ENCODE measurements at regions of chr17 and their contacts with region 1.

Region 1: DNA sequence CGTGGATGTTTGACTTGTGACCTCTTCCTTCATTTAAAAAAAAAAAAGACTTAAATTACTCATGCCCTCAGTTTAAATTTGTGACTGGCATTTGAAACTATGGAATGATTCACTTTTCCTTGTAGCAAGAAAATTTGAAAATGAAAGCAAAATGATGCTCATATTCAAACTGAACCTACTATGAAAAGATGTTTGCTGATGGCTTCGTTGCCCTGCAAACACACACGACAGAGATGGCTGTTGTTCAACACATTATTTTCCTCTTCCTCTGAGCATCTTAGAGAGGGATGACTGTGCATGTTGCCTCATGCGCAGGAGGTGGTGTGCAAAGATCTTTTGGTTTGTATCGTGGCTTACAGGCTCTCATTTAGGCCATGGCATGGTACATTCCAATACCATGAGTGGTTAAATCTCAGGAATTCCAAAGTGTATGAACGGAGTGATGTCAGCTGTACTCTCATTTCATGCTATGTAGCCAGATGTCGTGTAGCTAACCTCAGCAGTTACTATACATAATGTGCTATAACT is 164.5 kb downstream of the PRKCA start:
- DNase-seq: peak; percentile 73 to 98
- H3K4me3 ChIP-seq: peak overlapping the region; percentile 44; the same call in 1 of the 2 replicates
- H3K27ac ChIP-seq: peak overlapping the region; percentile 94
- H3K4me1 ChIP-seq: peaks cover 69% of the 10 kb centered on the region
- H3K27me3 ChIP-seq: no peaks in the 10 kb centered on the region
- CTCF ChIP-seq: no peak

Region 2: DNA sequence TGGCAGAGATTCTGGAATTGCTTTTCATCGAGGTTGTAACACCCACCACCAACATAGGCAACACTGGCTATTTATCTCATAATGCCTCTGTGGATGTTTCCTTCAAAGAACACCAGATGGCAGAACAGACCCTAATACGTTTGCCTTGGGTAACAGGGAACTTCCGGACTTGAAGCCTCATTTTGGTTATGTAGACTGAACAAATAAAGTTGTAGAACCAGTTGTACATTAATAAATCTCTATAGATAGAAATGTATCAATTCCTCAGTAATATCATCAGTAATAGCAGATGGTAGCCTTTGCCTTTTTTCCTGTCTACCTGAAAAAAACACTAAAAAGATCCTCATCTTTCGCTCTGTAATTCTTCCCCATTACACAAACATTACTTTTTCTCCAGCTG is 211.8 kb before region 1 on chr17:
- CTCF ChIA-PET with region 1: no interaction called
- POLR2A ChIA-PET with region 1: no interaction called
- intact Hi-C with region 1: loop called (anchors 5 kb)
- DNase-seq: peak; percentile 34 to 79
- H3K4me3 ChIP-seq: no peak overlapping the region
- H3K27ac ChIP-seq: no peak overlapping the region
- H3K4me1 ChIP-seq: peaks cover 10% of the 10 kb centered on the region
- H3K27me3 ChIP-seq: no peaks in the 10 kb centered on the region
- CTCF ChIP-seq: peak; percentile 86

Region 3: DNA sequence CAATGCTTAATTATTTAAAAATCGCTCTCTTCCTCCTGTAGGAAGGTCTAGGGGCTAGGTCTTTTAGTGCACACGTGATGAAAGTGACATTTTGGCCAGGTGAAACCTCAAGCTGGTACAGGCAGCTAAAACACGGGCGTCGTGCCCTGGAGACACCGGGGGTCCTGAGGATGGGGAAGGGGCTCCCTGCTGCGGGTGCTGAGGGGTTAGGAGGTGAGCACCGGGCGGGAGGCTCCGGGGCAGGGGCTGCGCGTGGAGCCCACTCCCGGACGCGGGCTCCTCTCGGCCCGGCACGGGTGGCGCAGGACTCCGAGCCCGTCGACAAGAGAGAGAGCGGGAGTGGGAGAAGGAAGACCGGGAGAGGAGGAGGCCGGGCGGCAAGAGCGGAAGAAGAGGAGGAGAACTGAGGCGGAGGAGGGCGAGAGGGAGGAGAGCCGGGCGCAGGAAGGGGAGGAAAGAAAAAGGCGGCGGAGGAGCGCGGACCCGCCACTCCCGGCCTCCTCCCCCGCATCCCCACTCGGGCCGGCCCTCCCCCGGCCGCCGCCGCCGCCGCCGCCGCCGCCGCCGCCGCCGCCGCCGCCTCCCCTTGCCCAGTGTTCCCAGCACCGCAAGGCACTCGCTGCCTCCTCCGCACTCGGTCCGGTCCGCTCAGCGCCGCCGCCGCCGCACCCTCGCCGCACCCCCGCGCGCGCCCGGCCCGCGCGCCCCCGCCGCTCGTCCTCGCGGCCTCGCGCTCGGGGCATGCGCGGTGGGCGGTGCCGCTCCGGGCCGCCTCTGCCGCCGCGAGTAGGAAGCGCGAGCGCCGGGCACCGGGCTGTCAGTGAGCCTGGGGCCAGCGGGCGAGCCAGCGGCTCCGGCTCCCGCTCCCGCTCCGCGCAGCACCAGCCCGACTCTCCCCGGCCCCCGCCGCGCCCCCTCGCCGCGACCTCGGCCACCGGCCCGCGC is 164.8 kb before region 1 on chr17 and contains the start of gene PRKCA:
- CTCF ChIA-PET with region 1: no interaction called
- POLR2A ChIA-PET with region 1: no interaction called
- intact Hi-C with region 1: loop called (anchors 2 kb)
- DNase-seq: peak in 1 of 2 experiments; percentile 83
- H3K4me3 ChIP-seq: peak within 1 kb of the TSS; percentile 96
- H3K27ac ChIP-seq: peak within 1 kb of the TSS; percentile 56
- H3K4me1 ChIP-seq: peaks cover 30% of the 10 kb centered on the region
- H3K27me3 ChIP-seq: no peaks in the 10 kb centered on the region
- CTCF ChIP-seq: no peak
- total RNA-seq, gene PRKCA: 23.1 and 23.8 TPM in 2 replicates

Region 4: DNA sequence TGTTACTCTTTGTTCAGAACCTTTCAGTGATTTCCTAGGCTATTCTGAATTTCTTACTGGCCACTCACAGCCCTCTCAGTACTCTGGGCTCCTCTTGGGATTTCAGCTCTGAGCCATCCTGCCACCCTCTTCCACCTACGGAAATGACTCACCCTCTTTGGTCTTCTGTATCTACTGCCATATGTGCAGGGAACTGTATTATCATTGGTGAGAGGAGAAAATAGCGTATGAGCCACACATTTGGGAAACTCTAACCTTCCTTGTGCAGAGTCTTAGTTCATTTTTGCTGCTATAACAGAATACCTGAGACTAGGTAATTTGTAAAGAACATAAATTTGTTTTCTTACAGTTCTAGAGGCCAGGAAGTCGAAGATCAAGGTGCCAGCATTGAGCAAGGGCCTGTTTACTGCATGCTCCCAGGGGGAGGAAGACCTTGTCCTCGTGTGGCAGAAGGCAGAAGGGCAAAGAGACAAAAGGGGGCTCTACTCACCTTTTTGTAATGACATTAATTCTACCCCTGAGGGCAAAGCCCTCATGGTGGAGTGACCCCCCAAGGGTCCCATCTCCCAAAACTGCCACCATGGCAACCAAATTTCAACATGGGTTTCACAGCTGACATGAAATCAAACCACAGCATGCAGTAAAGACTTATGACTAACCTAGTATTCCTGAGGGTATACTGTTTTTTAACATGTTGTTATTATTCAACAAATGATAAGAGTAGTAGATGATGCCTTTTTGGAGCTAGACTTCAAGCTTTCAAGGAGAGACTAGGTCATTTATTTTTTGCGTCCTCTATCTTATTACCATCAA is 27.3 kb after region 1 on chr17:
- CTCF ChIA-PET with region 1: no interaction called
- POLR2A ChIA-PET with region 1: no interaction called
- intact Hi-C with region 1: no loop called
- DNase-seq: no peak
- H3K4me3 ChIP-seq: no peak overlapping the region
- H3K27ac ChIP-seq: no peak overlapping the region
- H3K4me1 ChIP-seq: peaks cover 9% of the 10 kb centered on the region; the same call in 1 of the 2 replicates
- H3K27me3 ChIP-seq: no peaks in the 10 kb centered on the region
- CTCF ChIP-seq: no peak

Region 5: DNA sequence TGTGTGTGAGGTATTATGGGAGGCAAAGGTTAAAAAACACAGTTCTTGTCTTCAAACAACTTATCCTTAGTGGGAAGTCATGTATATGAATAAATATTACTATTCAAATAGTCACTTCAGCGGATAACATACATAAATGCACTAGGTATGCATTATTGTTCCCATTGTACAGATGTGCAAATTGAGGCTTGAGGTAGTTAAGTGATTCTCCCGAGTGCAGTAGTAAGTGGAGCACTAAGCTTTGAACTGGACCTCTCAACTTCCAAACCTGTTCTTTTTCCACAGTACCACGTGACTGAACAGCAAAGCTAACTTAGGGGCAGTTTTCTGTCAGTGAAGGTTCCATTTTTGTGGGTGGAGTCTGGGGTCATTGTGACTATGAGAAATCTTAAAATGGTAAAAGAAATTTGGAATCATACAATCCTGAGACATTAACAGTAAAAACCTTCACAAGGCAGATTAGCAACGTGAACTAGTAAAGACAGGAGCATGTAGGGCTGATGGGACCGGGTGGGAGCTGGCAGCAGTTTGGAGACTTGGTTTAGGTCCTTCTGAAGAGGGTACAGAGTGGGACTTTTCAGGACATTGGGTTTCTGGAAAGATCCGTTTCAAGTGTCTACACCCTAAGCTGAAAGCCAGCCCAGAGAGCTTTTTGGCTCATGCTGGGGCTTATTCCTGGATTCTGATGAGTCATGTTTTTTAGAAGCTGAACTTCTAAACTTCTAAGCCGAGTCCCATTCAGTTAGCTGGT is 40.4 kb after region 1 on chr17:
- CTCF ChIA-PET with region 1: no interaction called
- POLR2A ChIA-PET with region 1: no interaction called
- intact Hi-C with region 1: loop called (anchors 2 kb)
- DNase-seq: peak; percentile 11 to 58
- H3K4me3 ChIP-seq: no peak overlapping the region
- H3K27ac ChIP-seq: peak overlapping the region; percentile 61
- H3K4me1 ChIP-seq: peaks cover 36% of the 10 kb centered on the region
- H3K27me3 ChIP-seq: no peaks in the 10 kb centered on the region
- CTCF ChIP-seq: no peak

Region 6: DNA sequence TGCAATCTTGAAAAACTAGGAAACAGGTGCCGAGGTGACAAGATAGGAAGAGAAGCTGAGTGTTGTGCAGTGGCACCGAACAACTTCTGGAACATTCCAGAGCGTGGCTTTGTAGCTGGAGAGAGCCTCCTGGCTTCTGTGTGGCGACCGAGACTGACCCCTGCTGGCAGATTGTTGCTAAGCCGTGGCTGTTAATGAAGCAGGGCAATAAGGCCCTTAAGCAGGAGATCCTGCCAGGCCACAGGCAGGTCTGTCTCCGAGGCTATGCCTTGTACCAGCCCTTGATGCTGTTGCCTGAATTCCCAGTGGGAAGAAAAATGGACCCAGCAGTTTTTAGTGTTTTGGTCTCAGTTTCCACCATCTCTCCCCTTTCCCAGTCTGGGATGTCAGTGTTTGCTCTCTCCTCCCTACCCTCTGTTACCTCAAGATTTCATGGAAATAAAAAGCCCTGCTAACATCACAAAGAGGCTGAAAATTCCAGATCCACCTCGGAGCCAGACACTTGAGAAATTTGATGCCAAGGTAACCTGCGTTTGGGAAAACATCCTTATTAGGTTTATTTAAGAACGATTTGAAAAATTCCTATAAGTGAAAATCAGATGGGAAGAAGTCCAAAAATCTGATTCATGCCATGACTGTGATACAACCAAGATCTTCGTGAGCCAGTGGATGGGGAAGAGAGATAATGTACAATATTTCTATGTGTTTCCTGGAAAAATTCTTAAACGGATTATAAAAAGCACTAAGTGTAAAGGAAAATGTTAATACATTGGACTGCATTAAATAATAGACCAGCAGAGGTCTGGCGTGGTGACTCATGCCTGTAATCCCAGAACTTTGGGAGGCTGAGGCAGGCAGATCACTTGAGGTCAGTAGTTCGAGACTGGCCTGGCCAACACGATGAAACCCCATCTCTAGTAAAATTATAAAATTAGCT is 100.6 kb after region 1 on chr17:
- CTCF ChIA-PET with region 1: no interaction called
- POLR2A ChIA-PET with region 1: no interaction called
- intact Hi-C with region 1: loop called (anchors 2 kb)
- DNase-seq: peak; percentile 71 to 95
- H3K4me3 ChIP-seq: no peak overlapping the region
- H3K27ac ChIP-seq: peak overlapping the region; percentile 53
- H3K4me1 ChIP-seq: peaks cover 34% of the 10 kb centered on the region
- H3K27me3 ChIP-seq: no peaks in the 10 kb centered on the region
- CTCF ChIP-seq: peak; percentile 86

Region 7: DNA sequence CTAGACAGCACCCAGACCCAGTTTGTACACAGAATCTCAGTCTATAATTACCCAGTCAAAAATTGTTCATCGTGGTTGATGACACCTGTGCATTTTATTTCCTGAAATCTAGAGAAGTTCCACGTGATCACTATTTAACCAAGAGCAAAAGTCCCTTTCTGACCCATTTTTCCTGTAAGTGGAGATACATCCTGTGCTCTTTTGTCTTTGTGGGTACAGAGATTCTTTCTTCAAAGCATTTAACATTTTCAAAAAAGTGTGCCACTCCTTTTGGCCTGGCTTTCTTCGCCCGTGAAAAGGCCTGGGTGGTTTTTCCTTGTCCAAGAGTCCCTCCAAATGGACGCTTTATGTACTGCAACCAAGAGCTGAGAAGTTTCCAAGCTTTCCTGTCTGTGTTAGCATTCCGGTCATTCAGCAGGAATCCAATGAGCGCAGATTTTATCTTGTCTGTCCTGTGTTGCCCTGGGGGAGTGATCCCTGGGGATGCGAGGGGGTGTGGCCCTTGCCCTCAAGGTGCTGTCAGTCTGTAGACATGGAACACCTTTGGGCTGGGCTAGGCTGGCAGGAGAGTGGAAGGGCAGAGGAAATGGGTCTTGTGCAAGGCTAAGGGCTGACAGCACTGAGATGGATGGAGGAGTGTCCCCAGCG is 206.9 kb after region 1 on chr17:
- CTCF ChIA-PET with region 1: no interaction called
- POLR2A ChIA-PET with region 1: no interaction called
- intact Hi-C with region 1: loop called (anchors 5 kb)
- DNase-seq: peak; percentile 82 to 87
- H3K4me3 ChIP-seq: no peak overlapping the region
- H3K27ac ChIP-seq: peak overlapping the region; percentile 48
- H3K4me1 ChIP-seq: peaks cover 44% of the 10 kb centered on the region
- H3K27me3 ChIP-seq: no peaks in the 10 kb centered on the region
- CTCF ChIP-seq: peak; percentile 87